ENCODE measurements at regions of chr17 and their contacts with region 1.

Region 1: GRCh38 chr17:28849281-28849680 is 5.5 kb upstream of the ERAL1 start:
- DNase-seq: peak; percentile 15
- CTCF ChIP-seq: peak; percentile 6

Region 2: GRCh38 chr17:28861393-28862203 is 12.3 kb after region 1 on chr17:
- CTCF ChIA-PET with region 1: interaction called, 11 read pairs
- POLR2A ChIA-PET with region 1: no interaction called
- DNase-seq: no peak
- CTCF ChIP-seq: no peak

Region 3: GRCh38 chr17:28896884-28897768 is 47.8 kb after region 1 on chr17 and contains the start of gene FLOT2:
- CTCF ChIA-PET with region 1: interaction called, 13 read pairs
- POLR2A ChIA-PET with region 1: no interaction called
- DNase-seq: peak; percentile 56
- CTCF ChIP-seq: no peak